H1 (cell line): ENCODE measurements at regions of chr1 and their contacts with region 1.

Region 1: DNA sequence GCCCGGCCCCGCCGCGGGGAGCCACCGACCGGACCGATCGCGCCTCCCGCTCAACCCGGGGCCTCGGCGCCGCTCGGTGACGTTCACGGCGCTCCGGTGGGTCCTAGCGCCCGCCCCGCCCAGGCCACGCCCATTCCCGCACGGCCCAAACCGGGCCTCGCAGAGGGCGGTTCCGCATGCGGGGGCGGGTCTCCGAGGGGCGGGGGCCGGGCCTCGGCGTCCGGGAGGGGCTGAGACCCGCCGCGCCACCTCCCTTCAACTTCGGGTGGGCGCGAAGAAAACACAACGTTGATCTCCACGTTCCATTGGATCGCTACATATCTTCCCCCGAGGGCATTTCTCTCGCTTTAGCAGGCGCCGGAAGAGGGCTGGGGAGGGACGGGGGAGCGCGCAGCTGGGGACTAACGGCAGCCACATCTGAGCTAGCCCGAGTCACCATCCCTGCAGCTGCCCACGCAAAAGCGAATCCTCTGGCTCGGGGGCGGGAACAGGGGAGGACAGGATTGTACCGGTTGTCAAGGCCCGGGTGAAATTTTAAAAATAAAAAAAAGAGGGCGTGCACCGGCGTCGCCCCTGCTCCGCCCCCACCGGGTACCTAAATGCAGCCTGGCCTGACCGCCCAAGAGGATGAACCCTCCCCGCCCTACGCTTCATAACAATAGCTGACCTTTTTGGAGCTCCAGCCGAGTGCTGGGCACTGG is at the start of gene MAD2L2:
- DNase-seq: peak in 1 of 2 experiments; percentile 94
- H3K4me3 ChIP-seq: peak within 1 kb of the TSS; percentile 78 to 87 (median 84)
- H3K27ac ChIP-seq: peak within 1 kb of the TSS; percentile 93
- H3K4me1 ChIP-seq: peaks cover 13 to 38% (median 26%) of the 10 kb centered on the region in 4 experiments
- H3K27me3 ChIP-seq: no peaks in the 10 kb centered on the region
- CTCF ChIP-seq: no peak
- EP300 ChIP-seq: peak in 1 of 2 experiments; percentile 69; a peak in 1 of 3 replicates
- POLR2A ChIP-seq: peak in 1 of 2 experiments; percentile 17; a peak in 1 of 3 replicates
- RAD21 ChIP-seq: no peak
- total RNA-seq, gene MAD2L2: 310 and 314 TPM in 2 replicates

Region 2: DNA sequence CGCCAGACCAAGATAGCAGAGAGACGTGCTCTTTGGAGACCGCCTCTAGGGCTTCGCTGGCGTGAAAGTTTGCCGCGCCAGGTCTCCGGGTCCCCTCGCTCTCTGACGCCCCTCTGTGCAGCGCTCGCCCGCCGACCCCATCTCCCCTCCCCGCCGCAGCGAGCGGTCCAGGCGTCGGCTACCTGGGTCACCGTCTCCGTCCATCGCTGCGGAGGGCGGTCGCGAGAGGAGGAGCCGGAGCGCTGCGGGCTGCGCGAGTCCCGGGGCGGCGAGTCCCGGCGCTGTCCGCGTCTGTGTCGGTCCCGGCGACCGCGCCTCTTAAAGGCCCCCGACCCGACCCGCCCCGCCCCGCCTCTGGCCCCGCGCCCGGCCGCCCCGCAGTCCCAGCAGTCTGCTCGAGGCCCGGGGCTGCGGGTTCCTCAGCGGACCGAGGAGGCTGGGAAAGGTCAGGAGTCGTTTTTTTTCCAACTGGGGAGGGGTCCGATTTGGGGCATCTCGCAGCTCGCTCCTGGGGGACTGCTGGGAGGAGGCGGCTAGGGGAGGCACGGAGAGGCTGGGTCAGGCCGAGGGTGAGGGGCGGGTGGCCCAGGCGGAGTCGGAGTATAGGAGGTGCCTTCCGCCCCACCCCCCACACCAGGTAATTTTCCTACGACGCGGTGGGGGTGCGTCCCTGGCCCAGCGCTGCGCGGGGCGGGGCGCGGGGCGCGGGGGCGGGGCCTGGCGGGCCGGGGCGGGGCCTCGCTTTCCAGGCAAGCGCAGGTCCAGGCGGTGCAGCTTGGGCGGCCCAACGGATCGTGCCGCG is 26.9 kb before region 1 on chr1 and contains the starts of genes FBXO2 and FBXO44:
- CTCF ChIA-PET with region 1: interaction called, 11 read pairs
- POLR2A ChIA-PET with region 1: interaction called, 1,025 read pairs
- DNase-seq: peak in 1 of 2 experiments; percentile 90
- H3K4me3 ChIP-seq: peak within 1 kb of the TSS; percentile 56 to 78 (median 72)
- H3K27ac ChIP-seq: no peak within 1 kb of the TSS
- H3K4me1 ChIP-seq: peaks cover 6 to 35% (median 28%) of the 10 kb centered on the region in 4 experiments
- H3K27me3 ChIP-seq: peaks cover 0 to 4% (median 2%) of the 10 kb centered on the region in 4 experiments; a peak in 2 of 7 replicates
- CTCF ChIP-seq: no peak
- EP300 ChIP-seq: no peak
- POLR2A ChIP-seq: no peak
- RAD21 ChIP-seq: no peak
- total RNA-seq, gene FBXO2: 51.3 and 55.5 TPM in 2 replicates
- total RNA-seq, gene FBXO44: 27.2 and 29.2 TPM in 2 replicates

Region 3: DNA sequence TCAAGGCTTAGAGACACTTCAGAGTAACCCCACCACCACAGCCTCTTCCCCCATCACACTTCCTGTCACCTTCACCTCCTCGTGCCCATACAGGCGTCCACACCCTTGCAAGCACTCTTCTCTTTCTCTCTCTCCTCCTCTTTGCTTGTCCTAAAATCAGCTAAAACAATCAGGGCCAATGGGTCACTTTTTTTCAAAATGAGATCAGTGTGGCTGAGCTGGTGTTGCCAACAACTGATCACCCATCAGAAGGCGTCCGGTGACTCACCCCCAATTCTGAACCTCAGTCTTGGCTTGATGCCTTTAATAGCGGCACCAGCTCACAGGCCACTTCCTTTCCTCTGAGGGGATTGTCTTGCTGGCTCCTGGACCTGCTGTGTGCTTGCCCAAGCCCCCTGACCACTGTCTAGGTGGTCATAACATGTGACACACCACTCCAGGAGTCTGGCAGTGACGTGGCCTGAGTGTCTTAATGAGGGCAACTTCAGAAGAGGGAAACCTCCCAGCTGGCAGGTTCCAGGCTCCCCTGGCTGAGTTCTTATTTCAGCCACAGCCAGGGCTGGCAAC is 11.9 kb after region 1 on chr1:
- CTCF ChIA-PET with region 1: interaction called, 14 read pairs
- POLR2A ChIA-PET with region 1: interaction called, 1,025 read pairs
- DNase-seq: no peak
- H3K4me3 ChIP-seq: peak overlapping the region in 3 of 4 experiments; percentile 75 to 99 (median 79); a peak in 4 of 8 replicates
- H3K27ac ChIP-seq: no peak overlapping the region
- H3K4me1 ChIP-seq: peaks cover 8 to 38% (median 26%) of the 10 kb centered on the region in 4 experiments
- H3K27me3 ChIP-seq: peaks cover 0 to 2% (median 0%) of the 10 kb centered on the region in 4 experiments; a peak in 2 of 7 replicates
- CTCF ChIP-seq: no peak
- EP300 ChIP-seq: no peak
- POLR2A ChIP-seq: 0 out of 3 replicates have a peak, but pooled peaks of 1 of the 2 experiments have one; percentile 8
- RAD21 ChIP-seq: no peak

Region 4: GRCh38 chr1:11701551-11701961 is 20.3 kb after region 1 on chr1:
- CTCF ChIA-PET with region 1: interaction called, 266 read pairs
- POLR2A ChIA-PET with region 1: interaction called, 1,025 read pairs
- DNase-seq: no peak
- H3K4me3 ChIP-seq: no peak overlapping the region
- H3K27ac ChIP-seq: no peak overlapping the region
- H3K4me1 ChIP-seq: peaks cover 7 to 41% (median 29%) of the 10 kb centered on the region in 4 experiments
- H3K27me3 ChIP-seq: no peaks in the 10 kb centered on the region; a peak in 1 of 7 replicates
- CTCF ChIP-seq: no peak
- EP300 ChIP-seq: no peak
- POLR2A ChIP-seq: no peak
- RAD21 ChIP-seq: no peak

Region 5: DNA sequence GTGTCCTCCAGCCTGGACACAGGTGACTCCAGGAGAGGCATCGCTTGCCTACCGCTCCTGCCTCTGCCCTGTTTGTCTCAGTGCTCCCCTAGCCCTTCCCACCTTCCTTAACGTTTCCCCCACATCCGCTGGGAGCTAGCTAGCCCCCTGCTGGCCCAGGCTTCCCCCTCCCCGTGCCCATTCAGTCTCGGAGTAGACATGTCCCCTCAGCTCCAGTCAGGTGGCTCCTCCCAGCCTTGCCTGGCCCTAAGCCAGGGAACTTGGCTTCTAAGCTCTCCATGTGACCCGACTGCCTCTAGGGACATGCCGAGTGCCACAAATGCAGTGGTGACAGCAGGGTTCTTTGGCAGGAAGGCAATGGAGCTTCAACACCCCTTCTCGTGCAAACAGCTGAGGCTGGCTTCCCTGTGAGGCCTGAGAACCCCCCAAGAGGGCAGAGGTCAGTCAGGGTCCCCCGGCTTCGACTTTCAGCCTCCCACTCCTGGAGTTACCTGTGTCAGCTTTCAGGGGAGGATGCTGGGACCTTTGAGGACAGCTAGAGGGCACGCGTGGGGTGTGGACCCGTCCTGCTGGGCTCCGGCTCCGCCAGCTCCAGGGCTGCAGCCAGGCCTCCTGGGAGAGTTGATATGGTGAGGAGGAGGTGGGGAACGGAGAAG is 26.5 kb after region 1 on chr1:
- CTCF ChIA-PET with region 1: interaction called, 266 read pairs
- POLR2A ChIA-PET with region 1: interaction called, 329 read pairs
- DNase-seq: no peak
- H3K4me3 ChIP-seq: no peak overlapping the region
- H3K27ac ChIP-seq: no peak overlapping the region
- H3K4me1 ChIP-seq: peaks cover 7 to 36% (median 26%) of the 10 kb centered on the region in 4 experiments
- H3K27me3 ChIP-seq: no peaks in the 10 kb centered on the region
- CTCF ChIP-seq: no peak
- EP300 ChIP-seq: no peak
- POLR2A ChIP-seq: no peak
- RAD21 ChIP-seq: no peak

Region 6: DNA sequence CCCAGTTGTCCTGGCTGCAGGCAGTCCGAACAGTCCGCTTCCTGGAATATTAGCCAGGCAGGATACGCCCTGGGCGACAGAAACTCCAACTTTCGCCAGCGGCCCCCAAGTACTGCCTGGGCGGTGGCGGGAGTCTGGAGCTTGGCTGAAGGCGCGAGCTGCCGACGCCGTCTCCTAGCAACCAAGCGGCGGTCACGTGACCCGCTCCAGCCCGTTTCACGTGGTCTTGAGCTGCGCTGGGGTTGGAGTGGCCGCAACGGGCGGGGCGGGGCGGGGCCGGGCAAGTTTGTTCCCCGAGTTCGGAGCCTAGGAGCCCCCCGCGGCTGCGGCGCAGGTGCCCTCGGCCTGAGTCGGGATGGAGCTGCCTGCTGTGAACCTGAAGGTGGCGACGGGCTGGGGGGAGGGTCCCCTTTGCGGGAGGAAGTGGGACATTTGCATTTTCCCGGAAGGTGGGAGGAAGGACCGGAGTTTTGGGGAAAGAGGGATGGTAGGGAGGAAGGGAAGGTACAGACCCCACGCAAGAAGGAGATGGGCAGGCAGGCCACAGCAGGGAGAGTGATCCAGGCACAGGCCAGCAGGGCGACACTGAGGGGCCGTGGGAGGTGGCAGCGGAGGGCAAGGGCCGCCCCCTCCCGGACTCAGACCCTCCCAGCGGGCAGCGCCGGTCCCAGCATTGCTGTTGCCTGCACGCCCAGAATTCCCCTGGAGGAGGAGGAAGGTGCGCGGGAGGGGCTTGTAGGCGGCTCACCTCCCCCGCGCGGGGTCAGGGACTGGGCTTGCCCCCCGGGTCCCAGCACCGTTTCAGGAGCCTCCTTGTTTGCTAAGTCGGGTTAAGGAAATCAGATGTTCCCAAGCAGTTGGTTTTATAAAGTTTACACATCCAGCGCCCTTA is 54.9 kb after region 1 on chr1 and contains the start of gene AGTRAP:
- CTCF ChIA-PET with region 1: interaction called, 5 read pairs
- POLR2A ChIA-PET with region 1: interaction called, 14 read pairs
- DNase-seq: peak; percentile 79 to 96
- H3K4me3 ChIP-seq: peak within 1 kb of the TSS; percentile 58 to 86 (median 80)
- H3K27ac ChIP-seq: peak within 1 kb of the TSS; percentile 83
- H3K4me1 ChIP-seq: peaks cover 10 to 39% (median 13%) of the 10 kb centered on the region in 4 experiments
- H3K27me3 ChIP-seq: no peaks in the 10 kb centered on the region
- CTCF ChIP-seq: peak in 2 of 3 experiments; percentile 8 to 23; a peak in 2 of 4 replicates
- EP300 ChIP-seq: peak in 1 of 2 experiments; percentile 53; a peak in 1 of 3 replicates
- POLR2A ChIP-seq: peak in 1 of 2 experiments; percentile 73; a peak in 2 of 3 replicates
- RAD21 ChIP-seq: no peak
- total RNA-seq, gene AGTRAP: 69.7 and 70.9 TPM in 2 replicates

Region 7: GRCh38 chr1:11749203-11749689 is 68.0 kb after region 1 on chr1:
- CTCF ChIA-PET with region 1: interaction called, 4 read pairs
- POLR2A ChIA-PET with region 1: interaction called, 12 read pairs
- DNase-seq: peak in 1 of 2 experiments; percentile 72
- H3K4me3 ChIP-seq: no peak overlapping the region
- H3K27ac ChIP-seq: no peak overlapping the region
- H3K4me1 ChIP-seq: peaks cover 0 to 16% (median 5%) of the 10 kb centered on the region in 4 experiments; a peak in 5 of 7 replicates
- H3K27me3 ChIP-seq: no peaks in the 10 kb centered on the region
- CTCF ChIP-seq: peak; percentile 68 to 89 (median 77)
- EP300 ChIP-seq: no peak
- POLR2A ChIP-seq: no peak
- RAD21 ChIP-seq: peak; percentile 83 to 86